ENCODE measurements at regions of chr19 and their contacts with region 1.

Region 1: DNA sequence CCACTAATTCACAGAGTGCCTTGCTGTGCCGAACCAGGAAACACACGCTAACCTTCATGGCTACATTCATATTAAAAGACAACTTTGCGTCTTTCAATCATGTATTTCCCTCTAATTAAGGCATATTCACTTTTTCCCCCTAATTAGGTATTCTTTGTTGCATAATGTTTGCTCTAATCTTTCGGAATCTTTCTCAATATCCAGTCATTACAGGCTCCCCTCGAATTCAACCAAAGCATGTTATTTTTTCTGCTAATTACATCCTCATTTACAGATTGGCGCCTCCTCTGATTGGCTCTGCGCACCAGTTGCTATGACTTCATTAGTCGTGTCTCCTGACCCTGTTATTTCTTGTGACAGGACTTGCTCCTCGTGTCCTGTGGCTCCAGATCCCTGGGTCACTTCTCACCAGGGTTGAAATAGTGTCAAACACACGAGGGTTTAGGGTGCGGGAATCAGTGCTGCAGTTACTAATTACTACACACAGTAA is 226.7 kb upstream of the TSHZ3 start:
- DNase-seq: no peak
- ATAC-seq: no peak
- H3K4me3 ChIP-seq: no peak overlapping the region
- H3K4me3 Mint-ChIP-seq: no peak overlapping the region
- H3K27ac ChIP-seq: no peak overlapping the region
- H3K27ac Mint-ChIP-seq: no peak overlapping the region
- H3K4me1 ChIP-seq: no peaks in the 10 kb centered on the region
- H3K4me1 Mint-ChIP-seq: no peaks in the 10 kb centered on the region
- H3K27me3 ChIP-seq: no peaks in the 10 kb centered on the region
- H3K27me3 Mint-ChIP-seq: peaks cover 2% of the 10 kb centered on the region
- CTCF ChIP-seq: no peak

Region 2: DNA sequence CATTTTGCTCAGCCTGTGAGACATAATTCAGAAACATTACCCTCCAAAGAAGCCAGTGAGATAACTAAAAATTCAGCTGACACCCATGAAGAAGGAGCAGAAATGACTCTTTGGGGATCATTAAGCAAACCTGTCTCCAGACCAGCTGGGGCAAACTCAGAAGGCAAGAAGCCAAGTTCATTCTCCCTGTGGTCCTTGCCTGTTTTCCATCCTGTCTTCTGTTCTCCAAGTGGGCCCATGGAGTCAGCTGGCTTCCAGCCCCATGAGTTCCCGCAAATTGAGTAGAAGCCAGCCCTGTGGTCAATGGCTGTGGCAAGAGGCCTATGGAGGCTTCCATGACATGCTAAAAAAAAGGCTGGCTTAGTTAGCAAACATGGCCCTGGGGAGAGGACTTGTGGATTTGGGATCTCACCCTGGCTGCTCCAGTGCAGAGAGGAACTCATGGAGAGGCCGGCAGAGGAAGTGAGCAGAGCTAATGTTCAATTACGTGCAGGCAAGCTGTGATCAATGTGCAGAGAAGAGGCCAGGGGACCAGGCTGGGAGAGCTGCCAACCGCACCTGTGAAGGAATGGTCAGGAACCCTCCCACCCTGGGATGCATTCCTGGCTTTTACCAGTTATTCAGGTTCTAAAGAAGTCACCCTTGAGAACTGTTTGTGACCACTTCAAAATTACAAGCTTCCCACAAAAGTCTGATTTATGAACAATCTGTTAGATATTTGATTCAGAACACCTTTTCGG is 455.8 kb before region 1 on chr19:
- CTCF ChIA-PET with region 1: no interaction called
- POLR2A ChIA-PET with region 1: no interaction called
- intact Hi-C with region 1: loop called in 1 of 2 experiments (anchors 5 kb)
- DNase-seq: no peak
- ATAC-seq: no peak
- H3K4me3 ChIP-seq: no peak overlapping the region
- H3K4me3 Mint-ChIP-seq: no peak overlapping the region
- H3K27ac ChIP-seq: no peak overlapping the region
- H3K27ac Mint-ChIP-seq: no peak overlapping the region
- H3K4me1 ChIP-seq: no peaks in the 10 kb centered on the region
- H3K4me1 Mint-ChIP-seq: no peaks in the 10 kb centered on the region
- H3K27me3 ChIP-seq: peaks cover 0 to 3% of the 10 kb centered on the region in 2 experiments
- H3K27me3 Mint-ChIP-seq: no peaks in the 10 kb centered on the region
- CTCF ChIP-seq: no peak

Measured in CD8-positive, alpha-beta T cell (primary cell).